Activated CD4-positive, alpha-beta T cell treated with anti-CD3 and anti-CD28 coated beads, Interleukin-2, amount 10 ng/mL, durations not matched to agents 7 days and 5 days (primary cell): ENCODE measurements at regions of chr5 and their contacts with region 1.

Region 1: GRCh38 chr5:38809388-38810359 is 36.1 kb upstream of the OSMR start:
- DNase-seq: peak; percentile 58
- H3K4me3 Mint-ChIP-seq: no peak overlapping the region
- H3K27ac Mint-ChIP-seq: no peak overlapping the region
- H3K4me1 Mint-ChIP-seq: no peaks in the 10 kb centered on the region
- H3K27me3 Mint-ChIP-seq: peaks cover 12% of the 10 kb centered on the region

Region 2: DNA sequence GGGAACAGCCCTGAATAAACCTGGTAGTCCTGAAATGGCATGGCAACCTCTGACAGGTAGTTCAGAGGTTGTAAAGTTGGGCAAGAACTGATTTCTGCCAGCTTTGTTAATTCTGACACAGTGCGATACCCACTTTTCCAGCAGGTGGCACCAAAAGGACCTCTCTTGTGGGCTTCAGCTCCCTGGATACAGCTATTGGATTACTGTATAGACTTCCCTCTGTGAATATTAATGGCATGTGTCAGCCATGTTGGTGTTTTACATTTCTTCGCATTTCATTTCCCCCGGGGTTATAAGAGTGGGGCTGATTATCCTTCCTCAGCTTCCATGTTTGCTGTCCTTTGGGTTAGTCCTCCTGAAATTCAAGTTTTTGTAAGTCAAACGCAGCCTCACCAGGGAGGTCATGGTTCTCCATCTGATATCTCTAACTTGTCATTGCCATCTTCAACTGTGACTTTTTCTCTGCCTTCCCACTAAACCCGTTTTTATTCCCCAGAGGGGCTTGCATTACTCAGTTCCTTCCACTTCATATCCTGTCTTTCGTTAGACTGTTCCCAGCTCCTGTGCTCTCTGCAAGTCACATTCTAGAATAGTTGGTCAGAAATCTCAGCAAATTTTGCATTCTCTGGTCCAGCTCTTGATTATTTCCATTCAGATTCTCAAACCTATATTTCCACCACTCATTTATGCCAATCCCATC is 388.8 kb before region 1 on chr5:
- CTCF ChIA-PET with region 1: interaction called, 10 read pairs
- POLR2A ChIA-PET with region 1: no interaction called
- DNase-seq: peak; percentile 46
- H3K4me3 Mint-ChIP-seq: no peak overlapping the region
- H3K27ac Mint-ChIP-seq: no peak overlapping the region
- H3K4me1 Mint-ChIP-seq: no peaks in the 10 kb centered on the region
- H3K27me3 Mint-ChIP-seq: peaks cover 26% of the 10 kb centered on the region

Region 3: DNA sequence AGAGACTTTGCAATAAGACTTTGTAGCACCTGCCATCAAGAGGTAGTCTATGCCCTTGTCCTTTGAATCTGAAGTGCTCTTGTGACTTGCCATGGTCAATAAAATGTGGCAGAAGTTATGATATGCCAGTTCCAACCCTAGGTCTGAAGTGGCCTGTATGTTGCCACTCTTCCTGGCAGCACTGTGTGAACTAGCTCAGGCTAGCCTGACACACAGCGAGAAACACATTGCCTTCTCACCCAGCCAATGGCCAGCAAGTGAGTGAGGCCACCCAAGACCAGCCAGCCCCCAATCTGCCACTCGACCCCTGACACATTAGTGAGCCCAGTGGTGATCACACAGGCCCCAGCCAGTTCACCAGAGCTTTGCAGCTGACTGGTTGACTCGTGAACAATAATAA is 16.6 kb before region 1 on chr5:
- CTCF ChIA-PET with region 1: no interaction called
- POLR2A ChIA-PET with region 1: no interaction called
- DNase-seq: no peak
- H3K4me3 Mint-ChIP-seq: no peak overlapping the region
- H3K27ac Mint-ChIP-seq: no peak overlapping the region
- H3K4me1 Mint-ChIP-seq: no peaks in the 10 kb centered on the region
- H3K27me3 Mint-ChIP-seq: peaks cover 13% of the 10 kb centered on the region